CD8-positive, alpha-beta T cell (primary cell): ENCODE measurements at regions of chr7 and their contacts with region 1.

Region 1: DNA sequence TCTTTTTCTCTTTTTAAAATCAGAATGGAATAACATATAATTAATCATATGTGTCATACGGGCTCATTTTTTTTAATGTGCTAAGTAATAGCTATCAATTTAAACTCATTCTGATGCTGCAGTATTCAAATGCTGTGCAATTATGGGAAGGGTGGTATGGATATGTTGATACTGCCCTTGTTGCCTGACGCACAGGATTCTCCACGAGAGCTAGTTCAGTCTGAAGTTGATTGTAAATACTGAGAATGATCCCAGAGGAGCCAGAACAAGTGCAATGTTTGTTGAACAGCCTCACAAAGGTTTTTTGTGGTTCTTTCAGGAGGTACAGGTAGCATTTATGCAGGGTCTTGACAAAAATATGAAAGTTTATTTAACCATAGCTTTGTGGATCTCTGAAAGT is 13.4 kb downstream of the NPY start:
- DNase-seq: no peak
- ATAC-seq: no peak
- H3K4me3 ChIP-seq: no peak overlapping the region
- H3K4me3 Mint-ChIP-seq: no peak overlapping the region
- H3K27ac ChIP-seq: no peak overlapping the region
- H3K27ac Mint-ChIP-seq: no peak overlapping the region
- H3K4me1 ChIP-seq: no peaks in the 10 kb centered on the region
- H3K4me1 Mint-ChIP-seq: no peaks in the 10 kb centered on the region
- H3K27me3 ChIP-seq: no peaks in the 10 kb centered on the region
- H3K27me3 Mint-ChIP-seq: peaks cover 3% of the 10 kb centered on the region
- CTCF ChIP-seq: no peak

Region 2: DNA sequence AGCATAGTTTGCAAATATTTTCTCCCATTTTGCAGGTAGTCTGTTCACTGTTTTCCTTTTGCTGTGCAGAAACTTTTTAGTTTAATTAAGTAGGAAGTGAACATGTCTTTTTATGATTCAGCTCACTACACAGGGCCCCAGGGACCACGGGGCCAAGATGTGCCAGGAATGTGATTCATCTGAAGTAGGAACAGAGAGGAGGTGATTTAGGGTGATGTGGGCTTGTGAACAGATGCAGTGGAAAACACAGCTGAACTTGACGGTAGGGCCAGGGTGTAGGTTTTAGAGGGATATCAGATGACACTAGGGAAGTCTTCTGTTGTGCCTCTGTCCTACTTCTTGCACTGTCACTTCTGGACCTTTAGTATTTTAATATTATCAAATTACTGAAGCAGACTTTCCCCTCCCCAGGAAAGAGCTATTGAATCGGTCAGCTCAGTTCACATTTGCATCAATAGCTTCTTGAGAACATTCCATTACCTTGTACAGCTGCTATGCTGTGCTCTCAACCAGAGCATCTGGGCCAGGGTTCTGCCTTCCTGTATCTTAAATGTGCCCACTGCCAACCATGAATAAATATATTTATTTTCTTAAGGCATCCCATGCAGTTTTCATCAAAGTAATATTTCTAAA is 585.7 kb after region 1 on chr7:
- CTCF ChIA-PET with region 1: no interaction called
- POLR2A ChIA-PET with region 1: no interaction called
- intact Hi-C with region 1: no loop called
- DNase-seq: no peak
- ATAC-seq: no peak
- H3K4me3 ChIP-seq: no peak overlapping the region
- H3K4me3 Mint-ChIP-seq: no peak overlapping the region
- H3K27ac ChIP-seq: no peak overlapping the region
- H3K27ac Mint-ChIP-seq: no peak overlapping the region
- H3K4me1 ChIP-seq: no peaks in the 10 kb centered on the region
- H3K4me1 Mint-ChIP-seq: peaks cover 2% of the 10 kb centered on the region
- H3K27me3 ChIP-seq: no peaks in the 10 kb centered on the region
- H3K27me3 Mint-ChIP-seq: no peaks in the 10 kb centered on the region
- CTCF ChIP-seq: no peak

Region 3: GRCh38 chr7:25103773-25104172 is 806.4 kb after region 1 on chr7:
- CTCF ChIA-PET with region 1: no interaction called
- POLR2A ChIA-PET with region 1: no interaction called
- intact Hi-C with region 1: loop called in 1 of 2 experiments (anchors 5 kb)
- DNase-seq: no peak
- ATAC-seq: no peak
- H3K4me3 ChIP-seq: no peak overlapping the region
- H3K4me3 Mint-ChIP-seq: no peak overlapping the region
- H3K27ac ChIP-seq: no peak overlapping the region
- H3K27ac Mint-ChIP-seq: no peak overlapping the region
- H3K4me1 ChIP-seq: no peaks in the 10 kb centered on the region
- H3K4me1 Mint-ChIP-seq: no peaks in the 10 kb centered on the region
- H3K27me3 ChIP-seq: no peaks in the 10 kb centered on the region
- H3K27me3 Mint-ChIP-seq: peaks cover 4% of the 10 kb centered on the region
- CTCF ChIP-seq: no peak